ENCODE measurements at regions of chr22 and their contacts with region 1.

Region 1: GRCh38 chr22:42881982-42882656 is 25.0 kb upstream of the ARFGAP3 start:
- DNase-seq: no peak
- ATAC-seq: no peak
- H3K4me3 ChIP-seq: no peak overlapping the region
- H3K27ac ChIP-seq: no peak overlapping the region
- H3K4me1 ChIP-seq: no peaks in the 10 kb centered on the region
- CTCF ChIP-seq: no peak
- EP300 ChIP-seq: no peak
- POLR2A ChIP-seq: no peak
- RAD21 ChIP-seq: no peak

Region 2: GRCh38 chr22:42769574-42770447 is 112.3 kb before region 1 on chr22:
- CTCF ChIA-PET with region 1: no interaction called
- POLR2A ChIA-PET with region 1: no interaction called
- DNase-seq: peak in 1 of 2 experiments; percentile 51
- ATAC-seq: peak; percentile 18 to 62; a peak in 4 of 6 replicates
- H3K4me3 ChIP-seq: no peak overlapping the region
- H3K27ac ChIP-seq: peak overlapping the region; percentile 51 to 80; a peak in 4 of 6 replicates
- H3K4me1 ChIP-seq: peaks cover 15% of the 10 kb centered on the region
- CTCF ChIP-seq: no peak
- EP300 ChIP-seq: no peak
- POLR2A ChIP-seq: no peak
- RAD21 ChIP-seq: no peak

Region 3: GRCh38 chr22:42829302-42829701 is 52.8 kb before region 1 on chr22:
- CTCF ChIA-PET with region 1: no interaction called
- POLR2A ChIA-PET with region 1: no interaction called
- DNase-seq: no peak
- ATAC-seq: no peak
- H3K4me3 ChIP-seq: no peak overlapping the region
- H3K27ac ChIP-seq: no peak overlapping the region
- H3K4me1 ChIP-seq: no peaks in the 10 kb centered on the region
- CTCF ChIP-seq: no peak
- EP300 ChIP-seq: no peak
- POLR2A ChIP-seq: no peak
- RAD21 ChIP-seq: no peak

Region 4: DNA sequence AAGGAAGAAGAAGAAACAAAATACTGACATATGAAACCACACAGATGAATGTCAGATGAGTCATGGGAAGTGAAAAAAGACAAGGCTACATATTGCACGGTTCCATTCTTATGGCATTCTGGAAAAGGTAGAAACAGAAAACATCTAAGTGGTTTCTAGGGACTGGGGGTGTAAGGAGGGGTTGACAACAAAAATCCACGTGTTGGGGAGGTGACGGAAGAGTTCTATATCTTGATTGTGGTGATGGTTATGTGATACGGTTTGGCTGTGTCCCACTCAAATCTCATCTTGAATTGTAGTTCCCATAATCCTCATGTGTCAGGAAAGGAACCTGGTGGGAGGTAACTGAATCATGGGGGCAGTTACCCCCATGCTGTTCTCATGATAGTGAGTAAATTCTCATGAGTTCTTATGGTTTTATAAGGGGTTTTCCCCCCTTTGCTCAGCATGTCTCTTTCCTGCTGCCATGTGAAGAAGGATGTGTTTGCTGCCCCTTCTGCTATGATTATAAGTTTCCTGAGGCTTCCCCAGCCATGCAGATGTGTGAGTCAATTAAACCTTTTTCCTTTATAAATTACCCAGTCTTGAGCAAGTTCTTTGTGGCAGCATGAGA is 18.7 kb before region 1 on chr22:
- CTCF ChIA-PET with region 1: interaction called, 11 read pairs
- POLR2A ChIA-PET with region 1: no interaction called
- DNase-seq: peak in 1 of 2 experiments; percentile 39
- ATAC-seq: no peak
- H3K4me3 ChIP-seq: no peak overlapping the region
- H3K27ac ChIP-seq: peak overlapping the region in 1 of 2 experiments; percentile 66; a peak in 3 of 6 replicates
- H3K4me1 ChIP-seq: peaks cover 14% of the 10 kb centered on the region; the same call in 1 of the 3 replicates
- CTCF ChIP-seq: no peak
- EP300 ChIP-seq: no peak
- POLR2A ChIP-seq: no peak
- RAD21 ChIP-seq: no peak

Region 5: DNA sequence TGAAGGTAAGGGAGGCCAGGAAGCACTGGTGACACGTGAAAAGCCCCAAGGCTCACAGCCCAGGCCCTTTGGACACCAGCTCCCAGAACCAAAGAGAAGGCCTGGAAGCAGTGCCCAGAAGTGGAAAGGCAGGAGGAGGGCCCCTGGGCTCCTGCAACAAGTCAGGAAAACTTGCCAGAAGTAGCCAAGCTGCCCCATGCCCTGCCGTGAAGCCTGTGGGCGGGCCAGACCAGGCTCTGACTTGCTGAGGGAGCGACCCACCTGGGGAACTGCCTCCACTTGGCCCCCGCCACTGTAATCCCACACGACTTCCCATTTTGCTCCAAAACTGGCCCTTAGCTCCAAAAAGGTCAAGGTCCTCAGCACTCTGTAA is 26.2 kb after region 1 on chr22:
- CTCF ChIA-PET with region 1: no interaction called
- POLR2A ChIA-PET with region 1: no interaction called
- DNase-seq: no peak
- ATAC-seq: no peak
- H3K4me3 ChIP-seq: no peak overlapping the region
- H3K27ac ChIP-seq: no peak overlapping the region
- H3K4me1 ChIP-seq: no peaks in the 10 kb centered on the region
- CTCF ChIP-seq: no peak
- EP300 ChIP-seq: no peak
- POLR2A ChIP-seq: no peak
- RAD21 ChIP-seq: no peak